ENCODE measurements at regions of chr1 and their contacts with region 1.

Region 1: GRCh38 chr1:231407547-231408396 is 14.3 kb downstream of the EGLN1 start:
- DNase-seq: no peak
- ATAC-seq: no peak
- H3K4me3 ChIP-seq: no peak overlapping the region
- H3K4me3 Mint-ChIP-seq: no peak overlapping the region
- H3K27ac ChIP-seq: no peak overlapping the region
- H3K27ac Mint-ChIP-seq: no peak overlapping the region
- H3K4me1 ChIP-seq: no peaks in the 10 kb centered on the region
- H3K4me1 Mint-ChIP-seq: peaks cover 8 to 29% (median 27%) of the 10 kb centered on the region in 3 donors
- H3K27me3 ChIP-seq: no peaks in the 10 kb centered on the region
- H3K27me3 Mint-ChIP-seq: no peaks in the 10 kb centered on the region

Region 2: GRCh38 chr1:231376875-231377549 is 30.8 kb before region 1 on chr1:
- CTCF ChIA-PET with region 1: interaction called in 1 of 2 experiments, 3 read pairs
- POLR2A ChIA-PET with region 1: interaction called, 3 to 11 read pairs
- DNase-seq: no peak
- ATAC-seq: peak in 3 of 4 experiments; percentile 49 to 58 (median 55)
- H3K4me3 ChIP-seq: no peak overlapping the region
- H3K4me3 Mint-ChIP-seq: peak overlapping the region in 1 of 3 donors; percentile 21
- H3K27ac ChIP-seq: no peak overlapping the region
- H3K27ac Mint-ChIP-seq: peak overlapping the region; percentile 4 to 40
- H3K4me1 ChIP-seq: peaks cover 0 to 14% of the 10 kb centered on the region in 2 experiments
- H3K4me1 Mint-ChIP-seq: peaks cover 48 to 53% (median 51%) of the 10 kb centered on the region in 3 donors
- H3K27me3 ChIP-seq: no peaks in the 10 kb centered on the region
- H3K27me3 Mint-ChIP-seq: no peaks in the 10 kb centered on the region

Region 3: DNA sequence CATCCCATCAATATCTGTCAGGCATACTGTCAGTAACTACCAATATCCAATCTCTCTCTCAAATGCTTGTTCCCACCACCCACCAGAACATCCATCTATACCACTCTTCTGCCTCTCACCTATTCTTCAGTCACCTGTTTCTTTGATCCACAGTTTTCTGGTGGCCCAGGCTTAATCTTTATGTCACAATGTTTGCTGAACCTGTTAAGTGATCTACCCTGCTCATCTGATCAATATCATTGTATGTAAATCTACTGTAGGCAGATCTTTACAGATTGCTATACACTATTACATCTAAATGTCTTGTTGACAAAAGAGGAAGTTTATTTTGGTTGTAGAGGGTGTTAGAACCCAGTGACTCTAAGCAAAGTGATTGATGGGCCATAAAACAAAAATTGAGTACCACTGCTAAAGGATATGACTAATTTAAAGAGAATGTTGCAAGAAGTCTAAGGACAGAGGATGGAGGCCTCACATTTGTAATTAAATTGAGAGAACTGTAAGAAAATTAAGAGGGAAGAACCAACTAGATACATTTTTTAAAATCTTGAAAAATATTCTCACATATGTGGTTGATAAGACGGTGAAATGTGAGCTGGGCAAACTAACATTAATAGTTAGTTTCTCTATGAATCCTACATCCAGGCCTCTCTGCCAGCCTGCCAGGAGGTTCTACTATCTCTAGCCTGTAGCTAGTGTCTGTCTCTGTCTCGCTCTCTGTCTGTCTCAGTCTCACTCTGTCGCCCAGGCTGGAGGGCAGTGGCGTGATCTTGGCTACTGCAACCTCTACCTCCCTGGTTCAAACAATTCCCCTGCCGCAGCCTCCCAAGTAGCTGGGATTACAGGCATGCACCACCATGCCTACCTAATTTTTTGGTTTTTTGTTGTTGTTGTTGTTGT is 19.8 kb before region 1 on chr1:
- CTCF ChIA-PET with region 1: interaction called, 7 to 17 read pairs
- POLR2A ChIA-PET with region 1: no interaction called
- DNase-seq: no peak
- ATAC-seq: no peak
- H3K4me3 ChIP-seq: no peak overlapping the region
- H3K4me3 Mint-ChIP-seq: no peak overlapping the region
- H3K27ac ChIP-seq: no peak overlapping the region
- H3K27ac Mint-ChIP-seq: no peak overlapping the region
- H3K4me1 ChIP-seq: peaks cover 0 to 2% of the 10 kb centered on the region in 2 experiments
- H3K4me1 Mint-ChIP-seq: peaks cover 40 to 47% (median 45%) of the 10 kb centered on the region in 3 donors
- H3K27me3 ChIP-seq: no peaks in the 10 kb centered on the region
- H3K27me3 Mint-ChIP-seq: no peaks in the 10 kb centered on the region

Measured in T-cell (primary cell).